T-cell (primary cell): ENCODE measurements at regions of chr2 and their contacts with region 1.

Region 1: GRCh38 chr2:74876081-74876886 is 42.4 kb downstream of the HK2 start:
- DNase-seq: peak in 29 of 35 experiments; percentile 7 to 75 (median 29)
- ATAC-seq: peak; percentile 69 to 89 (median 76)
- H3K4me3 ChIP-seq: no peak overlapping the region
- H3K4me3 Mint-ChIP-seq: no peak overlapping the region
- H3K27ac ChIP-seq: no peak overlapping the region
- H3K27ac Mint-ChIP-seq: no peak overlapping the region
- H3K4me1 ChIP-seq: peaks cover 0 to 4% of the 10 kb centered on the region in 2 experiments
- H3K4me1 Mint-ChIP-seq: peaks cover 4 to 6% (median 5%) of the 10 kb centered on the region in 3 donors
- H3K27me3 ChIP-seq: no peaks in the 10 kb centered on the region
- H3K27me3 Mint-ChIP-seq: no peaks in the 10 kb centered on the region

Region 2: GRCh38 chr2:74690571-74690970 is 185.7 kb before region 1 on chr2:
- CTCF ChIA-PET with region 1: interaction called, 18 to 20 read pairs
- POLR2A ChIA-PET with region 1: no interaction called
- DNase-seq: peak in 10 of 35 experiments; percentile 5 to 60 (median 8)
- ATAC-seq: peak in 3 of 4 experiments; percentile 32 to 53 (median 49)
- H3K4me3 ChIP-seq: no peak overlapping the region
- H3K4me3 Mint-ChIP-seq: no peak overlapping the region
- H3K27ac ChIP-seq: no peak overlapping the region
- H3K27ac Mint-ChIP-seq: no peak overlapping the region
- H3K4me1 ChIP-seq: no peaks in the 10 kb centered on the region
- H3K4me1 Mint-ChIP-seq: no peaks in the 10 kb centered on the region
- H3K27me3 ChIP-seq: peaks cover 0 to 2% of the 10 kb centered on the region in 2 experiments
- H3K27me3 Mint-ChIP-seq: peaks cover 0 to 2% of the 10 kb centered on the region in 2 donors

Region 3: DNA sequence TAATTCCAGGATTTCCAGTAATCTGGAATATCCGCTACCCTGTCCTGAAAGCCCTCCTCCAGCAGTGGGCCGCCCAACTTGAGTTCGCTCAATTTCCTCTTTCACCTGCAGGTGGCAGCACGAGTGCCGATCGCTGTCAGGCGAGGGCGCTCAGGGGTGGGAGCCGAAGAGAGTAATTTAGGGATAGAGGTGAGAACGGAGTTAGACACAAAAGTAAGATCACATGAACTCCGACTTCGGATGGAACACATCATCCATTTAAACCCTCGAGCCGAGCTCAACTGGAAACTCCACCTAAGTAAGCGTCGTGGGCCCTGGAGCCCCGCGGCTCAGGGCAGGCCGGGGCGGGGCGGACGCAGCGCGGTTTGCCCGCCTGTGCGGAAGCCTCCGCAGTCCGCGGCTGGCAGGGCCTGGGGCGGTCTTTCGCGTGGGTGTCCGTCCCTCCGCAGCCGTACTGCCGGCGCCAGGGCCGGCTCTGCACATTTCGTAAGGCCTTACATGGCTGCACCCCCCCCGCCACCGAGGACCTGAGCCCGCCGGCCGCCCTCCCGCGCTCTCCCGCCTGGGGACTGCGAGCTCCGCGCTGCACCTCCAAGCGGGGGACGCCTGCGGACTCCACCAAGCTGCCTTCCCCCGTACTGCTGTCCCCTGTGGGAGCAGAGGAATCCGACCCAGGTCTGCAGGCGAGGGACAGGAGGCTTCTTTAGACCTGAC is 161.0 kb before region 1 on chr2:
- CTCF ChIA-PET with region 1: interaction called, 43 to 46 read pairs
- POLR2A ChIA-PET with region 1: no interaction called
- DNase-seq: peak; percentile 49 to 85 (median 74)
- ATAC-seq: peak; percentile 88 to 92 (median 91)
- H3K4me3 ChIP-seq: peak overlapping the region; percentile 43 to 79
- H3K4me3 Mint-ChIP-seq: peak overlapping the region; percentile 77 to 86 (median 81)
- H3K27ac ChIP-seq: no peak overlapping the region
- H3K27ac Mint-ChIP-seq: no peak overlapping the region
- H3K4me1 ChIP-seq: peaks cover 0 to 5% of the 10 kb centered on the region in 2 experiments
- H3K4me1 Mint-ChIP-seq: peaks cover 7 to 11% (median 8%) of the 10 kb centered on the region in 3 donors
- H3K27me3 ChIP-seq: peaks cover 2 to 14% of the 10 kb centered on the region in 2 experiments
- H3K27me3 Mint-ChIP-seq: peaks cover 3 to 10% of the 10 kb centered on the region in 2 donors

Region 4: DNA sequence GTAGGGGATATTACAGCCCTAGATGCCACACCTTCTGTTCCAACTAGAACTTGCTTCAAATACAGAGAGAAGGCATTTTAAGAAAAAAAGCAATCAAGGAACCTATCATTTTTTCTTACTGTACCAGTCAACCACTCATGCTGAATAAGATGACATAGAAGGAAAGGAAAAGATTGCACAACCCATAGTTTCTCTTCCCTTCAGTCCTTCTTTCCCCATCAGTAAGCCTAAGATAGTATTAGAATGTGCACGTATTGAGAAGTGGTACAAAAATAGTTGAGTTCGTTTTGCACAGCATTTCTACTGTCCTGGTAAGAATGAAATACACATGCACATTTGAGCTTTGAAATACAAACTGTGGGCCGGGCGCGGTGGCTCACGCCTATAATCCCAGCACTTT is 69.4 kb before region 1 on chr2:
- CTCF ChIA-PET with region 1: no interaction called
- POLR2A ChIA-PET with region 1: no interaction called
- DNase-seq: no peak
- ATAC-seq: no peak
- H3K4me3 ChIP-seq: no peak overlapping the region
- H3K4me3 Mint-ChIP-seq: no peak overlapping the region
- H3K27ac ChIP-seq: no peak overlapping the region
- H3K27ac Mint-ChIP-seq: no peak overlapping the region
- H3K4me1 ChIP-seq: no peaks in the 10 kb centered on the region
- H3K4me1 Mint-ChIP-seq: no peaks in the 10 kb centered on the region
- H3K27me3 ChIP-seq: peaks cover 0 to 7% of the 10 kb centered on the region in 2 experiments
- H3K27me3 Mint-ChIP-seq: no peaks in the 10 kb centered on the region

Region 5: DNA sequence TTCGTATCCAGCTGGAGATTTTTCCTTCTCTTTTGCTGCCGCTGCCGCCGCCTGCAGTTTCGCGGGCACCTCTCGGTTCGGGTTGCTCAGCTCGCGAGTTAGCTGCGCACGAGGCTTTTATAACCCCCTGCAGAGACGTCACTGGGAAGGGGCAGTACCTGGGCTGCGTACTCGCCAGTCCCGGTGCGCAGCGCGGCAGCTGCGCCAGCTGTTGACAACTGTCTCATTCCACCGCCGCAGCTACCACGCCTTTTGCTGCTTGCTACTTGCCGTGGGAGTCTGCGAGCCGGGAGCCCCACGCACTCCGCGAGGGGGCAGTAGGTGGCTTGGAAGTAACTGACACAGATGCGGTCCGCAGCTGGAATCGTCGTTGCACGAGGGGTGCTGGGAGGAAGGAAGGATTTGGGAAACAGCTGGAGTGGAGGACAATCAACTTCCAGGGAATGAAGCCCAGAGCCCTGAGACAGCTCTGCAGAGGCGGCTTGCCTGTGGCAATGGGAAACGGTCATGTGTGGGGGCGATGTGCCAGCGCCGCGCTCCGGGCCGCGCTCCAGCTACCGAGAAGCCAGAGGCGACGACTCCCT is 323.2 kb after region 1 on chr2 and contains the start of gene TACR1:
- CTCF ChIA-PET with region 1: no interaction called
- POLR2A ChIA-PET with region 1: no interaction called
- DNase-seq: peak in 34 of 35 experiments; percentile 6 to 61 (median 36)
- ATAC-seq: peak; percentile 19 to 92 (median 40)
- H3K4me3 ChIP-seq: peak within 1 kb of the TSS in 1 of 2 donors; percentile 52
- H3K4me3 Mint-ChIP-seq: peak within 1 kb of the TSS; percentile 46 to 70 (median 53)
- H3K27ac ChIP-seq: no peak within 1 kb of the TSS
- H3K27ac Mint-ChIP-seq: peak within 1 kb of the TSS in 1 of 2 donors; percentile 45
- H3K4me1 ChIP-seq: peaks cover 2 to 19% of the 10 kb centered on the region in 2 experiments
- H3K4me1 Mint-ChIP-seq: peaks cover 0 to 20% (median 10%) of the 10 kb centered on the region in 3 donors
- H3K27me3 ChIP-seq: peaks cover 11 to 37% of the 10 kb centered on the region in 2 experiments
- H3K27me3 Mint-ChIP-seq: peaks cover 56 to 74% of the 10 kb centered on the region in 2 donors
- total RNA-seq, gene TACR1: not detected